GM13977 (cell line): ENCODE measurements at regions of chr1 and their contacts with region 1.

Region 1: DNA sequence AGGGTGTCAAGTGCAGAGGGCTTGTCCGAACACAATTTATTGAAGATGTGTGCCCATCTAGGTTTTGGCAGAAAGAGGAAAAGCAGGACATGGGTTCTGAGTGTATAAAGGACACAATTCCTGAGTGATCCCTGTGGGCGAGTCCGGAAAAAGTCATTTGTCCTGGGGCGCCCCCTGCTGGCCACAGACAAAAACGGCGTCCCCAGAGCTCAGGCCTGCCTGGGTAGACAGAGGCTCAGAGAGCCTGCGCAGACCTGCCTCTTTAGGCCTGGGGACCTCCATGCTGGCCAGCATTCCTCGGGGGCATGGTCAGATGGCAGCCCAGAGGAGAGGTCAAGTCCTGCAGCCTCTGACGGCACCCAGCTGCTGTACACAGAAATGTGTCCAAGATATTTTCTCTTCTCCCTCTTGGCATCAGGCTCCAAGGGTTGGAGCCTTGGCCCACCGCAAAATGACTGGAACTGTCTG is 65.5 kb upstream of the LRP8 start:
- DNase-seq: peak; percentile 83
- CTCF ChIP-seq: peak; percentile 91

Region 2: DNA sequence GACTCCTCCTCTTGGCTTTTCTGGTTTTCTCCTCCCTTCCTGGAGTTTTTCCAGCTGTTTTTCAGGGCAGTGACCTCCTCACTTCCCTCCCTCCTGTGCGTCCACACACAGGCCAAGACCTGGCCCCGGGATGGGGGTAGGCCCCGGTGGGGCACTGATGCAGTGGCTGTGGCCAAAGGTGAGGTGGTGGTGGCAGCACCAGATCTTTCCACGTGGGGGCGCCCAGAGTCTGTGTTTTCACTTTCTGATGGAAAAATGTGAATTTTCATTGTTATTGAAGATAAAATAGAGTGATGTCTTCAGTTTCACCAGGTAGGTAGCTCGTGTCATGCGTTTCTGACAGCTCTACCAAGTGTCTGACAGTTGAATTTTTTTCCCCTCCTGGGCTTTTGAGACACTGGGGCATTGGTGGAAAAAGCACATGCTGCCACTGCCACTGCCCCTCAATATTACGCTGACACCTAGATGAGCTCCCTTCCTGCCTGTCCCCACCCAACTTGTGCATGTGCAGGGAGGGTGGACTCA is 115.1 kb before region 1 on chr1:
- in situ Hi-C with region 1: loop called (anchors 5 kb)
- DNase-seq: peak; percentile 88
- CTCF ChIP-seq: peak; percentile 91